Cardiac septum (tissue), 1 donor: ENCODE measurements at regions of chr1 and their contacts with region 1.

Region 1: DNA sequence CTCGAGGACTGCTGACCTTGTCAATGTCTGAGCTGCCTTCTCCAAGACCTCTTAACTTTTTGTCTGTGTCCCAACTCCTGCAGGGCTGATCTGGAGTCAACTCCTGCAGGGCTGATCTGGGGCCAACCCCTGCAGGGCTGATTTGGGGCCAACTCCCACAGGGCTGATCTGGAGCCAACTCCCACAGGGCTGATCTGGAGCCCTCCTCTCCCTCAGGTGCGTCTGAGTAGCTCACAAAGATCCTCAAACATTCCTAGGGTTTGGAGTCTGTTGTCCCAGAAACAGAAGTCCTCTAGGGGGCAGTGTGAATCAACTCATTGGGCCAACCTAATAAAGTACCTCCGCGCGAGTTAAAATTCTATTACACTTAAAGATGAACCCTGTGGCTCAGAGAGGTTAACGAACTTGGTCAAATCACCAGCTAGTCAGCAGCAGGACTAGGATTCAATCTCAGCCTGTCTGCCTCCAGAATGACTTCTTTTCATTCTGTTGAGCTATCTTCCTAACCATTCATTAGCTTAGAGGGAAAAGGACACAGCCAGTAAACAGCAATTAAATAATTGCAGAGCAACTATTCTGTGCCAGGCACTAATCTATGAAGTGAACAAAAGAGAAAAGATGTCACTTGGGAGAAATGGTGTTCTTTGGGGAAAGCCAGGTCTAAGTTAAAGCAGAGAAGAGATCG is 17.2 kb upstream of the RLF start:
- DNase-seq: no peak

Region 2: DNA sequence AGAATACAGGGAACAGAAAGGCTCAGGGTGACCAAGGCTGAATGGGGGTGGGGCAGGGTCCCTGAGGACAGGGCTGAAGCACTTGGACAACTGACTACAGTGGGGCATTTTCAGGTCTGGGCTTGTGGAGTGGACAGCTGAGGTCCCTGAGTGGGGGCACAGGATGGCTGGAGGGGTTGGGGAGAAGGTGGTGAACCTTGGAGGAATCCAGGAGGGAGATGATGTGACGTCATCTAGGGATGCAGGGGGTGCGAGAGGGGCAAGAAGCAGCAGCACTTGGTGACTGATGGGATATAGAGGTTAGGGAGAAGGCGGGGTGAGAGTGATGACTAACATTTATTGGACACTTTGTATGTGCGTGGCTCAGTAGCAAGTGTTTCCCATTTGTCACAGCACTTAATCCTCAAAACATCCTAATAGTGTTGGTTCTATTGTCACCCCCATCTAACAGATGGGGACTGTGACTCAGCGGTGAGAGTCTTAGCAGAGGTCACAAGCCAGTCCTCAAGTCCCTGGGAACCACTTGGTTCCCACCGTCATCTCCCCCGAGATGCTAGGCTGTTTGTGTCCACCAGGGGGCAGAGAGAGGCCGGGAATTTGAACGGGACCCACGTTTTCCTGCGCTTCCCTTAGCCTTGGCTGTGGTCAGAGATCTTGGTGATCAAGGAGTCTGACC is 327.5 kb before region 1 on chr1:
- intact Hi-C with region 1: no loop called
- DNase-seq: no peak

Region 3: DNA sequence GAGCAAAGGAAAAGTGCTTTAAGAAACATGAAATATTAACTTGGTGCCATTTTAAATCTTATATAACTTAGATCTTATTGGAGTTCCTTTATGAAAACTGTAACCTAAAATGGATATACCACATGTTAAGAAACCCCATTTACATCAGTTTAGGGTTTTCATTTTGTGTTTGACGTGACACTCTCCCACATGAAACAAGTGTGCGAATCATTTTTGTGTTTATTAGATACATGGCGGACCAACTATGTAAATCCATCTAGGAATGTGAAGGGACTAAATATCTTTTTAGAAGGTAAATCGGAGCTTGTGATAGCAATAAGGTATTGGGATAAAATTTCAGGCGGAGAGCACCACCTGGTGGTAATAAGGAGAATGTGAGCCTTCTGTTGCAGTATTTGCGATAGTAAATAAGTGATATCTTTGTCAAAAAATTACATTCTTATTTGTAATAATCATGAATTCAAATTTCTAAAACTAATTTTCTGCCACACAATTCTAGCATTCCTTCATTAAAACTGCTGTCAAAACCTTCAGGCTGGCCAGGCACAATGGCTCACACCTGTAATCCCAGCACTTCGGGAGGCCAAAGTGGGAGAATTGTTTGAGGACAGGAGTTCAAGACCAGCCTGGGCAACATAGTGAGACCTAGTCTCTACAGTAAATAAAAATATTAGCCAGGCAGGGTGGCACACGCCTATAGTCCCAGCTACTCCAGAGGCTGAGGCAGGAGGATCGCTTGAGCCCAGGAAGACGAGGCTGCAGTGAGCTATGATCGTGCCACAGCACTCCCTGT is 260.8 kb after region 1 on chr1:
- intact Hi-C with region 1: loop called (anchors 5 kb)
- DNase-seq: no peak